Activated B cell treated with CpG ODN at 0.5 μM for 24 hours (primary cell): ENCODE measurements at regions of chr4 and their contacts with region 1.

Region 1: DNA sequence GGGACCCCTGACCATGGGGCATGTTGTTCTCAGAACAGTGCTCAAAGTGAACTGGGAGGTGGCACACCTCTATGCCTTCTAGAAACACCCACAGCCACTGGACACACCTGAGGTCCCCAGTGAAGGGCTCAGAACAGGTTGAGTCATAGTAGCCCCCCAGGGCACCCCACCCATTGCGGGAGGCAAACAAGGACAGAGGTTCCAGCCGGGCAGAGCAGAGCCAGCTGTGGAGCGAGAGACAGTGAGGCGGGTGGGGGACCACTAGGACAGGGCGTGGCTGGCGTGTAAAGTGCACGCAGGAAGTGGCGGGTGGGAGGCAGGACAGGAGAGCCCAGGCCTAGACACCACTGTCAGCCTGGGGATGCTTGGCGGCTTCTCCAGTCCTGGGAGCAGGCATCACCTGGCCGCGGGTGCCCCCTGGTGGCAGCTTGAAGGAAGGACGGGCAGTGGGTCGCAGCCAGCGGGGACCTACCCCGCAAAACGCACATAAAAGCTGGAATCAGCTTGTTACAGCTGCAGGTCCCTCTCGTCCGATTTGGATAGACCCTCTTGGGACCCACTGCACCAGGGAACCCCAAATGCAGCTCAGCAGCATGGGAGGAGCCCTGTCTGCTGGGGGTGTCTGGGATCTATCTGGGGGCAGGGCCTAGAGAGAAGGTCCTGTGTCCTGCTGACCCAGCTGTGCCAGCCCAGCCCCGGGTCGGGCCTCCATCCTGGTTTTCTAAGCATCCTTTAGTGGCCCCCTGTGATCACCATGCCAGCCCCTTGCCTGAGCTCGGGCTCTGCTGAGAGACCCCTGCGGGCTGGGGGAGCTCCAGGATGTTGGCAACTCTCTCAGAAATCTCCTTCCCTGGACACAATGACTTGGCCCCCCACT is 57.6 kb downstream of the WFS1 start:
- DNase-seq: peak; percentile 68
- ATAC-seq: peak; percentile 72
- H3K4me3 Mint-ChIP-seq: no peak overlapping the region
- H3K27ac Mint-ChIP-seq: no peak overlapping the region
- H3K4me1 Mint-ChIP-seq: no peaks in the 10 kb centered on the region
- H3K27me3 Mint-ChIP-seq: peaks cover 34% of the 10 kb centered on the region
- CTCF ChIP-seq: no peak

Region 2: GRCh38 chr4:6076391-6076790 is 250.9 kb before region 1 on chr4:
- CTCF ChIA-PET with region 1: no interaction called
- POLR2A ChIA-PET with region 1: no interaction called
- intact Hi-C with region 1: loop called (anchors 2 kb)
- DNase-seq: no peak
- ATAC-seq: no peak
- H3K4me3 Mint-ChIP-seq: no peak overlapping the region
- H3K27ac Mint-ChIP-seq: no peak overlapping the region
- H3K4me1 Mint-ChIP-seq: no peaks in the 10 kb centered on the region
- H3K27me3 Mint-ChIP-seq: peaks cover 4% of the 10 kb centered on the region
- CTCF ChIP-seq: no peak

Region 3: DNA sequence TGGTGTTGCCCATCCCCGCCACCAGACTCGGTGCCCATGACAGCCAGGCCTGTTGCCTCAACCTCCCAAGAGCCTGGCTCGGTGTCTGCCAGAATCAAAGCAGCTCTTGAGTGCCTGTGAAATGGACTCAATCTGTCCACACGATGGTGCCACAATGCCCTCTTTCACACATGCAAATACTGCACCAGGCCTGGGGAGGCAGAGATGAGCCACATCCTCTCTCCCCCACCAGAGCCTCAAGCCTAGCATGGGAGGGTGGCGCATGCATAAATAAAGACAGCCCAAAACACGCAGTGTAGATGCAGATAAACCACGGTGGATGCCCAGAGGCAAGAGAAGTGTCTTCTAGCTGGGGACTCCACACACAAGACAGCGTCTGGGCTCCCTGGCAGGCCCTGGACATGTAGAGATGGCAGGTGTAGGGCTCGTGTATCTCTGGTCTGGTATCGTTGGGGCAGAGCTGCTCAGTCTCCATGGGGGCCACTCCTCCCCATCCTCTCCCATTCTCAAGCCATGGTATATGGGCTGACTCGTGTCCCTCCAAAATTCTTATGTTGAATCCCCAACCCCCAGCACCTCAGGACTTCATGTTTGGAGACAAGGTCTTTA is 192.6 kb before region 1 on chr4:
- CTCF ChIA-PET with region 1: no interaction called
- POLR2A ChIA-PET with region 1: no interaction called
- intact Hi-C with region 1: loop called (anchors 1 kb)
- DNase-seq: no peak
- ATAC-seq: no peak
- H3K4me3 Mint-ChIP-seq: no peak overlapping the region
- H3K27ac Mint-ChIP-seq: no peak overlapping the region
- H3K4me1 Mint-ChIP-seq: no peaks in the 10 kb centered on the region
- H3K27me3 Mint-ChIP-seq: no peaks in the 10 kb centered on the region
- CTCF ChIP-seq: no peak

Region 4: DNA sequence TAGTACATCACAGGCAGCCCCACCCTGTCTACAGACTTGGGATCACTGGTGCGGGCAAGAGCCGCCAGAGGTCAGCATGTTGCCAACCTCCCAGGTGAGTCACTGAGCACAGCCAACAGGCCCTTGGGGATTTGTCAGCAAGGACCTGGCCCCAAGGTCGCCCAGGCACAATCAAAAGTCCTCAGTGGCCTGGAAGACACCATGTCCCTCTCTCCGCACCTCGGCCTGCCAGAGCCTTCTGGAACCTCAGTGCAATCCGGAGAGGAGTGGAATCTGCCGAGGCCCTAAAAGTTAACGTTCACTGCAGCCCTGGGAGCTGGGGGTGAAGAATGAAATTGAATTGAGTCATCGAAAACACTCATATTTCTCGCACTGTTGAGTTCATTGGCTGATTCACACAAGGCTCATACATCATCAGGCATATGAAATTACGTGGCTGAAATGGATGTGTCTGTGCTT is 16.7 kb after region 1 on chr4:
- CTCF ChIA-PET with region 1: no interaction called
- POLR2A ChIA-PET with region 1: no interaction called
- intact Hi-C with region 1: no loop called
- DNase-seq: no peak
- ATAC-seq: no peak
- H3K4me3 Mint-ChIP-seq: no peak overlapping the region
- H3K27ac Mint-ChIP-seq: no peak overlapping the region
- H3K4me1 Mint-ChIP-seq: peaks cover under 1% of the 10 kb centered on the region
- H3K27me3 Mint-ChIP-seq: peaks cover 20% of the 10 kb centered on the region
- CTCF ChIP-seq: no peak